AG04450 (cell line): ENCODE measurements at regions of chr12 and their contacts with region 1.

Region 1: GRCh38 chr12:118183705-118184104 is 47.8 kb downstream of the PEBP1 start:
- DNase-seq: no peak
- H3K4me3 ChIP-seq: no peak overlapping the region
- H3K27ac ChIP-seq: no peak overlapping the region
- H3K27me3 ChIP-seq: no peaks in the 10 kb centered on the region
- CTCF ChIP-seq: no peak

Region 2: DNA sequence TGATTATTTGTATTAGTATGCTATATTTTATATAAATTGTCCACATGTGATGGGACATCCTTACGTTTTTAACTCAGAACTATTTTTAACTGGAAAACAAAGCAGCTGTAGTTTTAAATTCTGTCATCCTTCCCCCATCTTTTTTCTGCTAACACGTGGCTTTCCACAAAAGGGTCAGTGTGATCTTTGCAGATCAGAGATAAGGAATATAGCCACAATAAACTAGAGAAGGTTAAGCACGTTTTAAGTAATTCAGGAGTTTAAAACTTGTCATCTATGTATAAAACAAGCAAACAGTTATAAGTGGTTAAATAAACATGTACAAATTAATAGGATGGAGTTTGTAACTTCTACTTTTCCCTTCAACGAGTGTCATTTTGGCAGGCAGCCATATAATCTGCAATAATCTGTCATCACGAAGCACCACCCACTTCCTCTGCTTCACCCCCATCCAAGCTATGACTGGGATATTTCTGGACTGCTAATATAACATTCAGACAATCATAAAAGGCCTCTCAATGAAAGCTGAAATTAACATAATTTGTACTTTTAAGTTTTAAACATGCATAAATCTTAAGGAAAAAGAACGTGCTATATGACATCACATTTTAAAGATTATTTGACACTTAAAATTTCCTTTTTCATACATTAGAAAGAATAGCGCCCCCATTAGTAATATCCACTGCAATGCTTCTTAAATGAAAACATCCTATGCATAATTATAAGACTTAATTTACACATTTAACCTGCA is 173.7 kb after region 1 on chr12:
- CTCF ChIA-PET with region 1: interaction called, 11 read pairs
- POLR2A ChIA-PET with region 1: no interaction called
- DNase-seq: no peak
- H3K4me3 ChIP-seq: no peak overlapping the region
- H3K27ac ChIP-seq: peak overlapping the region; percentile 72
- H3K27me3 ChIP-seq: no peaks in the 10 kb centered on the region
- CTCF ChIP-seq: no peak

Region 3: DNA sequence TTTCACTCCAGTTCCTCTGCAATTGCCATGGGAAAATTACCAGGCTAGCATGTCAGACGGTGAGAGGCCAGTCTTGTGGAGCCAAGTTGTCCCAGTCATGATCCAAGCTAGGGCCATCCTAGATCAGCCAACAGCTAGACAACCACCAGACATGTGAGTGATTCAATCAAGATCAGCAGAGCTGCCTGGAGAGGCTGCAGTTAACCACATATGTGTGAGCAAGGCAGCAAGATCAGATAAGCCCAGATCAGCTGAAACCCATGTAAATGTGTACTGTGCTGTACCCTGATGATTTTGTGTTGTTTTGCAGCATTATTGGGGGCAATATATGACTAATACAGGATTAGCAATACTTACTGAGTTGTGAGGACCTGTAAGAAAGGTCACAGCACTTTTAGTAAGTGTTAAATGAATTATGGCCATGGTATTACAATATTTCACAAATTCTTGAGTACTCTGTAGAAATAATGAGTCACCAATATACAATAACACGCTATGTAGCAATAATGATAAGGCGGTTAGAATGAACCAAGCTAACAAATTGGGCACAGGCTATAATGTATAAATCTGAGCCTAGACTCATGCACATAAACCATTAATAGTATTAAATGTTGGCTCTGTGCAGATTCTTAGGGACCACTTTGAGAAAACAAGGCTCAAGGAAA is 284.1 kb after region 1 on chr12:
- CTCF ChIA-PET with region 1: no interaction called
- POLR2A ChIA-PET with region 1: no interaction called
- DNase-seq: no peak
- H3K4me3 ChIP-seq: no peak overlapping the region
- H3K27ac ChIP-seq: no peak overlapping the region
- H3K27me3 ChIP-seq: no peaks in the 10 kb centered on the region
- CTCF ChIP-seq: no peak